Breast epithelium (tissue), 4 donors: ENCODE measurements at regions of chr6 and their contacts with region 1.

Region 1: GRCh38 chr6:33014841-33015634 is 5.6 kb upstream of the HLA-DOA start:
- DNase-seq: no peak
- H3K4me3 ChIP-seq: no peak overlapping the region
- H3K27ac ChIP-seq: no peak overlapping the region
- H3K4me1 ChIP-seq: no peaks in the 10 kb centered on the region
- H3K27me3 ChIP-seq: peaks cover 0 to 4% of the 10 kb centered on the region in 2 donors
- CTCF ChIP-seq: peak; percentile 82 to 87 (median 82)
- POLR2A ChIP-seq: no peak

Region 2: DNA sequence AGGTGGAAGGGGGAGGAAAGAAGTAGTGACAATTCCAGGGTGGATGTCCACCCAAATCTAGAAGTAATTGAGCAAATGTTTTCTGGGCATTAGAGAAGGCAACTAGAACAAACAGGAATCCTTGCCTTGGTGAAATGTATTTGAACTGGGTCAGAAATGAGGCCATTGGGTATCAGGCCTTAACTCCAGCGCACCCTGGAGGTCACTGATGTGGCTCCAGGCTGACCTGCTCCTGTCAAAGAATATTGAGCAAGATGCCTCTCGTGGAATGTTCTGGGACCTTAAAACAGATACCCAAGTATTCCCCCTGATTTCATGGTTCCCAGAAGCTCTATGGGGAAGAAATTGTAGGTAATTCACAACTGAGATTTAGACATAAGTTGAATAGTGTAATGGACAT is 67.7 kb after region 1 on chr6:
- intact Hi-C with region 1: loop called (anchors 10 kb)
- DNase-seq: no peak
- H3K4me3 ChIP-seq: no peak overlapping the region
- H3K27ac ChIP-seq: peak overlapping the region in 1 of 2 donors; percentile 11
- H3K4me1 ChIP-seq: no peaks in the 10 kb centered on the region
- H3K27me3 ChIP-seq: no peaks in the 10 kb centered on the region
- CTCF ChIP-seq: peak in 2 of 3 donors; percentile 59 to 79
- POLR2A ChIP-seq: no peak